ENCODE measurements at regions of chrX and their contacts with region 1.

Region 1: DNA sequence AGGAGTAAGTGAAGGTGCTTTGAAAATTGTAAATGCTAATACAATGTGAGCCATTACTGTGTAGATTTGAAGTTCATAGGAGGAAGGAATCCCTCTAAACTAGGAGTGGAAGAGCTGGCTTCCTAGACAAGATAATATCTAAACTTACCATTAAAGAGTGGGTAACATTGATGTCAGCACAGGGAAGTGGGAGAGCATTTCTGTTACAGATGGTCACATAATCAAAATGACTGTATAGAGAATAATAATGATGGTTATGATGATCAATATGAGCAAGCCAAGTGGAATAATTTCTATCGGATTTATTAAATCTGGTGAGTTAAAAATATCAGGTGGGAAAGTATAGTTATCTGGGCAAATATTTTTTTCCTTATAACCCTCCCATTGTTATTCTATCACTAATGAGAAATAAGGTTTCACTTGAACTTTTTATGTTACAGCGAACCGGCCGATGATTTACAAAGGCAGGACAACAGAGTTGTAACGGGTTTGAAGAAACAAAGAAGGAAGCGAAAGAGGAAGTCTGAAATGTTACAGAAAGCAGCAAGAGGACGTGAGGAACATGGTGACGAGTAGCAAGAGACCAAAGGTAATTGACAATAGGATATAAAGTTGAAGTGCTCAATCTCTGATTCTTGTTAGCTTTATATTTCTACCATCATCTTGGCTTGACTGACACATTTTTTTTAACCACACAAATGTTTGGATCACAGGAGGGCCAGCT is 43.5 kb downstream of the FMR1NB start:
- DNase-seq: peak; percentile 62
- ATAC-seq: peak; percentile 92
- H3K4me3 ChIP-seq: peak overlapping the region in 1 of 5 experiments; percentile 7
- H3K4me3 Mint-ChIP-seq: peak overlapping the region; percentile 29
- H3K27ac ChIP-seq: peak overlapping the region; percentile 58 to 65
- H3K27ac Mint-ChIP-seq: peak overlapping the region; percentile 66
- H3K4me1 ChIP-seq: peaks cover 8 to 14% of the 10 kb centered on the region in 2 donors
- H3K4me1 Mint-ChIP-seq: peaks cover 19% of the 10 kb centered on the region
- H3K27me3 ChIP-seq: no peaks in the 10 kb centered on the region
- H3K27me3 Mint-ChIP-seq: no peaks in the 10 kb centered on the region
- CTCF ChIP-seq: no peak

Region 2: GRCh38 chrX:147911192-147912022 is 113.2 kb before region 1 on chrX and contains the start of gene FMR1:
- CTCF ChIA-PET with region 1: no interaction called
- POLR2A ChIA-PET with region 1: no interaction called
- intact Hi-C with region 1: loop called (anchors 10 kb)
- DNase-seq: peak; percentile 95
- ATAC-seq: peak; percentile 85
- H3K4me3 ChIP-seq: peak within 1 kb of the TSS; percentile 70 to 90 (median 81)
- H3K4me3 Mint-ChIP-seq: peak within 1 kb of the TSS; percentile 93
- H3K27ac ChIP-seq: peak within 1 kb of the TSS; percentile 83 to 87
- H3K27ac Mint-ChIP-seq: peak within 1 kb of the TSS; percentile 92
- H3K4me1 ChIP-seq: peaks cover 28 to 29% of the 10 kb centered on the region in 2 donors
- H3K4me1 Mint-ChIP-seq: peaks cover 36% of the 10 kb centered on the region
- H3K27me3 ChIP-seq: no peaks in the 10 kb centered on the region
- H3K27me3 Mint-ChIP-seq: no peaks in the 10 kb centered on the region
- CTCF ChIP-seq: no peak
- total RNA-seq, gene FMR1: 92.7 and 105 TPM in 2 replicates

Region 3: DNA sequence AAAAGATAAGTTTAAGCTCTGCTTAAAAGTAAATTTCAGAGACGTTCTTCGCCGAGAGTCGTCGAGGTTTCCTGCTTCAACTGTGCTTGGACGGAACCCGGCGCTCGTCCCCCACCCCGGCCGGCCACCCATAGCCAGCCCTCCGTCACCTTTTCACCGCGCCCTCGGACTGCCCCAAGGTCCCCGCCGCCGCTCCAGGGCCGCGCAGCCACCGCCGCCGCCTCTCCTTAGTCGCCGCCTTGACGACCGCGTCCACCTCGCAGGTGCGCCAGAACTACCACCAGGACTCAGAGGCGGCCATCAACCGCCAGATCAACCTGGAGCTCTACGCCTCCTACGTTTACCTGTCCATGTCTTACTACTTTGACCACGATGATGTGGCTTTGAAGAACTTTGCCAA is 27.4 kb after region 1 on chrX:
- CTCF ChIA-PET with region 1: no interaction called
- POLR2A ChIA-PET with region 1: no interaction called
- intact Hi-C with region 1: no loop called
- DNase-seq: no peak
- ATAC-seq: no peak
- H3K4me3 ChIP-seq: no peak overlapping the region
- H3K4me3 Mint-ChIP-seq: no peak overlapping the region
- H3K27ac ChIP-seq: no peak overlapping the region
- H3K27ac Mint-ChIP-seq: no peak overlapping the region
- H3K4me1 ChIP-seq: no peaks in the 10 kb centered on the region
- H3K4me1 Mint-ChIP-seq: no peaks in the 10 kb centered on the region
- H3K27me3 ChIP-seq: no peaks in the 10 kb centered on the region
- H3K27me3 Mint-ChIP-seq: no peaks in the 10 kb centered on the region
- CTCF ChIP-seq: no peak

Region 4: GRCh38 chrX:148310426-148311165 is 286.0 kb after region 1 on chrX:
- CTCF ChIA-PET with region 1: no interaction called
- POLR2A ChIA-PET with region 1: no interaction called
- intact Hi-C with region 1: no loop called
- DNase-seq: peak; percentile 9
- ATAC-seq: no peak
- H3K4me3 ChIP-seq: no peak overlapping the region
- H3K4me3 Mint-ChIP-seq: no peak overlapping the region
- H3K27ac ChIP-seq: no peak overlapping the region
- H3K27ac Mint-ChIP-seq: no peak overlapping the region
- H3K4me1 ChIP-seq: peaks cover 5 to 8% of the 10 kb centered on the region in 2 donors
- H3K4me1 Mint-ChIP-seq: peaks cover 6% of the 10 kb centered on the region
- H3K27me3 ChIP-seq: peaks cover 0 to 2% (median 0%) of the 10 kb centered on the region in 4 experiments
- H3K27me3 Mint-ChIP-seq: no peaks in the 10 kb centered on the region
- CTCF ChIP-seq: no peak

Measured in B cell (primary cell).